K562 (cell line): ENCODE measurements at regions of chr6 and their contacts with region 1.

Region 1: GRCh38 chr6:10303599-10304506 is 111.0 kb downstream of the TFAP2A start:
- DNase-seq: peak in 1 of 4 experiments; percentile 23
- ATAC-seq: peak; percentile 70
- H3K4me3 ChIP-seq: no peak overlapping the region
- H3K27ac ChIP-seq: peak overlapping the region; percentile 20; the same call in 1 of the 3 replicates
- H3K4me1 ChIP-seq: no peaks in the 10 kb centered on the region; a peak in 2 of 5 replicates
- H3K27me3 ChIP-seq: no peaks in the 10 kb centered on the region
- CTCF ChIP-seq: no peak
- EP300 ChIP-seq: no peak
- POLR2A ChIP-seq: no peak
- RAD21 ChIP-seq: no peak

Region 2: DNA sequence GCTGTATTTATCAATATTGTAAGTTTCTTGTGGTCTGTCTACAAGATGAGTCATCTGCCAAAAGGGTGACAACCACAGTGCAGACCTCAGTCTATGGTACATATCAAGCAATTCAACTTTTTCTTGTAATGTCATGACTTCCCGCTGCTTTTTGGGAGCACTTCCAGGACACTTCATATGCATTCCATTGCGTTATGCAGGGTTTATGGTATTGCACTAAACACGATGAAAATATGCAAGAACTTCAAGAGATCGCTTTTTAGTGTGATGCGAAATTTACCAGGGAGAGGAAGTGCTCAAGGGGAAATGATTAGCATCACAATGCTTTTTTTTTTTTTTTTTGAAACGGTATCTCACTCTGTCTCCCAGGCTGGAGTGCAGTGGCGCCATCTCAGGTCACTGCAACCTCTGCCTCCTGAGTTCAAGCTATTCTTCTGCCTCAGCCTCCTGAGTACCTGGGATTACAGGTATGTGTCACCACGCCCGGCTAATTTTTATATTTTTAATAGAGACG is 55.4 kb before region 1 on chr6:
- CTCF ChIA-PET with region 1: no interaction called
- POLR2A ChIA-PET with region 1: no interaction called
- in situ Hi-C with region 1: no loop called
- intact Hi-C with region 1: no loop called
- DNase-seq: peak in 1 of 4 experiments; percentile 37
- ATAC-seq: peak; percentile 47
- H3K4me3 ChIP-seq: no peak overlapping the region
- H3K27ac ChIP-seq: no peak overlapping the region
- H3K4me1 ChIP-seq: peaks cover 0 to 9% of the 10 kb centered on the region in 2 experiments; a peak in 1 of 5 replicates
- H3K27me3 ChIP-seq: no peaks in the 10 kb centered on the region
- CTCF ChIP-seq: peak in 1 of 3 experiments; percentile 44; a peak in 2 of 6 replicates
- EP300 ChIP-seq: no peak
- POLR2A ChIP-seq: no peak
- RAD21 ChIP-seq: peak; percentile 2 to 28; a peak in 2 of 4 replicates

Region 3: GRCh38 chr6:10315014-10315413 is 11.2 kb after region 1 on chr6:
- CTCF ChIA-PET with region 1: no interaction called
- POLR2A ChIA-PET with region 1: interaction called, 21 read pairs
- in situ Hi-C with region 1: no loop called
- intact Hi-C with region 1: no loop called
- DNase-seq: peak in 2 of 4 experiments; percentile 13
- ATAC-seq: peak; percentile 10
- H3K4me3 ChIP-seq: no peak overlapping the region
- H3K27ac ChIP-seq: peak overlapping the region; percentile 54; the same call in 1 of the 3 replicates
- H3K4me1 ChIP-seq: peaks cover 20 to 37% of the 10 kb centered on the region in 2 experiments
- H3K27me3 ChIP-seq: peaks cover 0 to 4% of the 10 kb centered on the region in 2 experiments; a peak in 2 of 5 replicates
- CTCF ChIP-seq: no peak
- EP300 ChIP-seq: no peak
- POLR2A ChIP-seq: no peak
- RAD21 ChIP-seq: no peak

Region 4: DNA sequence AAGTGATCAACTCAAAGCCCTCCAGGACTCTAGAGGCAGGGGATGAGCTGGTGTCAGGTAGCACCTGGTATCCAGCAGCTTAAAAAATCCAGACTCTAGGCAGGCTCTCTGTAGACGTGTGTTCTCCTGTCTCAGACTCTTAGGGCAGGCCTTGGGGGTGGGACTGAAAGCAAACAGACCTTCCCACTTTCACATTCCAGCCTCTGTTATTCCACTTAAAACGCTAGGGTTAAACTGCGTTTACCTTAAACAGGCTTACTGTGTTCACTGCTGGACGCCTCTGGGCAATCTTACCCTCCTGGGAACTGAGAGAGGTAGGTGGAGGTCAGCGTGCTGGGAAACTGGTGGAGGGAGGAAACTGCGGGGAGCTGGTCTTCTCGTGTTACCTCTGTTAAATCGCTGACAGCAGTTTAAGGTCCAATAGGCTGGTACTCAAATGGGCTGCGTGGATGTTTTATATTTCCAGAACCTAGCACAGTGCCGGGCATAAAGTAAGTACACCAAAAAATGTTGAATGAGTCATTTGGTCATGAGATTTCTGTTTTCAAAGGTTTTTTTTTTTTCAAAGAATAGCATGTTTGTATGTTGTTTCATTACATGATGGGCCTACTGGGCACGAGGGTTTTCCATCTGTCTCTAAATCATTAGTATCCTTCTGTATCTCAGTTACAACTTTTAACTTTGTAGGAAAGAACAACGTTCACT is 217.4 kb after region 1 on chr6 and contains the start of gene GCNT2:
- CTCF ChIA-PET with region 1: no interaction called
- POLR2A ChIA-PET with region 1: no interaction called
- in situ Hi-C with region 1: no loop called
- intact Hi-C with region 1: no loop called
- DNase-seq: peak in 2 of 4 experiments; percentile 34 to 66
- ATAC-seq: peak; percentile 57
- H3K4me3 ChIP-seq: peak within 1 kb of the TSS; percentile 24
- H3K27ac ChIP-seq: peak within 1 kb of the TSS; percentile 61
- H3K4me1 ChIP-seq: peaks cover 20 to 29% of the 10 kb centered on the region in 2 experiments
- H3K27me3 ChIP-seq: no peaks in the 10 kb centered on the region
- CTCF ChIP-seq: no peak
- EP300 ChIP-seq: no peak
- POLR2A ChIP-seq: no peak
- RAD21 ChIP-seq: no peak
- polyA plus RNA-seq, gene GCNT2: 1.1 to 1.4 TPM